ENCODE measurements at regions of chr1 and their contacts with region 1.

Region 1: DNA sequence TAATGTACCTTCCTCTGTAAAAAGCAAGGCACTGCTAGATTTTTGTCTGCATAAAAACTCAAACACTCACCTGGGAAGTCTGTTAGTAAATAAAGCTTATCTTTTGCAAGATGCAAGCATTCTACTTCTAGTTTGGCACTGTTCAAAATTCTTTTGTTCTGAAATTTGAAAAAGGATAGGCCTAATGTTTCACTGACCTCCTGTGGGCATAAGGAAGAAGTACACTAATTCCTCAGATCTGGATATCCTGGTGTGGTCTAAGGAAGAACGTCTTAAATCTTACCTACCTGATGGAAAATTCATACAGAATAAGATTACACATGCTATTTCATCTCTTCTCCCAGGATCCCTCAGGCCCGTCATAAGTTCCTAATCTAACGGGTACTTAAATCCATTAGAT is 93.5 kb upstream of the CAMK1G start:
- DNase-seq: peak; percentile 69
- H3K4me3 Mint-ChIP-seq: no peak overlapping the region
- H3K27ac Mint-ChIP-seq: no peak overlapping the region
- H3K4me1 Mint-ChIP-seq: peaks cover 26% of the 10 kb centered on the region
- H3K27me3 Mint-ChIP-seq: no peaks in the 10 kb centered on the region
- CTCF ChIP-seq: peak; percentile 90

Region 2: GRCh38 chr1:208652296-208653160 is 837.5 kb before region 1 on chr1:
- CTCF ChIA-PET with region 1: interaction called, 10 read pairs
- POLR2A ChIA-PET with region 1: interaction called, 5 read pairs
- intact Hi-C with region 1: loop called (anchors 2 kb)
- DNase-seq: peak; percentile 83
- H3K4me3 Mint-ChIP-seq: no peak overlapping the region
- H3K27ac Mint-ChIP-seq: no peak overlapping the region
- H3K4me1 Mint-ChIP-seq: peaks cover 13% of the 10 kb centered on the region
- H3K27me3 Mint-ChIP-seq: peaks cover 21% of the 10 kb centered on the region
- CTCF ChIP-seq: peak; percentile 98

Region 3: GRCh38 chr1:209266590-209267172 is 223.3 kb before region 1 on chr1:
- CTCF ChIA-PET with region 1: interaction called, 17 read pairs
- POLR2A ChIA-PET with region 1: no interaction called
- intact Hi-C with region 1: no loop called
- DNase-seq: peak; percentile 55
- H3K4me3 Mint-ChIP-seq: peak overlapping the region; percentile 7
- H3K27ac Mint-ChIP-seq: no peak overlapping the region
- H3K4me1 Mint-ChIP-seq: peaks cover 10% of the 10 kb centered on the region
- H3K27me3 Mint-ChIP-seq: no peaks in the 10 kb centered on the region
- CTCF ChIP-seq: no peak

Region 4: DNA sequence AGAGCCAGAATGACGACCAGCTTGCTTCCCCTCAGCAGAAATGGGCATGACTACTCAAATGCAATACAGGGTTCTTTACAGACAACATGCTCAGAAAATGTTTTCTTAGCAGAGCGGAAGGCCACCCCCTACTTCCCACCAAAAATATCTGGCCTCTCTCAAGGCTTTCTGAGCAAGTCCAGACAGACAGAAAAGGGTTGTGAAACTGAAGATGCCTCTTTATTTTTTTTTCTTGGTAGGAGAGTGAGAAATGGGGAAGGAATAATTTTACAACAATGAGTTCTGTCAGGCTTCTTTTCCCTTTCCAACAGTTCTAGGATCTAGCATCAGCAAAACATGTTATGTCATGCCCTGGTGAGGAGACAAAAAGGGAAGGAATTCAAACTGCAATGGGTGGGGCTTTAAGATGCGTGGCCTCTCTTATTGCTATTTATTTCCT is 78.5 kb before region 1 on chr1:
- CTCF ChIA-PET with region 1: interaction called, 10 read pairs
- POLR2A ChIA-PET with region 1: interaction called, 16 read pairs
- intact Hi-C with region 1: no loop called
- DNase-seq: peak; percentile 99
- H3K4me3 Mint-ChIP-seq: peak overlapping the region; percentile 44
- H3K27ac Mint-ChIP-seq: peak overlapping the region; percentile 89
- H3K4me1 Mint-ChIP-seq: peaks cover 70% of the 10 kb centered on the region
- H3K27me3 Mint-ChIP-seq: no peaks in the 10 kb centered on the region
- CTCF ChIP-seq: no peak

Region 5: GRCh38 chr1:209443971-209444651 is 45.9 kb before region 1 on chr1:
- CTCF ChIA-PET with region 1: interaction called, 133 read pairs
- POLR2A ChIA-PET with region 1: interaction called, 391 read pairs
- intact Hi-C with region 1: no loop called
- DNase-seq: peak; percentile 54
- H3K4me3 Mint-ChIP-seq: no peak overlapping the region
- H3K27ac Mint-ChIP-seq: peak overlapping the region; percentile 17
- H3K4me1 Mint-ChIP-seq: peaks cover 24% of the 10 kb centered on the region
- H3K27me3 Mint-ChIP-seq: no peaks in the 10 kb centered on the region
- CTCF ChIP-seq: no peak

Region 6: GRCh38 chr1:209473025-209473424 is 17.0 kb before region 1 on chr1:
- CTCF ChIA-PET with region 1: interaction called, 15 read pairs
- POLR2A ChIA-PET with region 1: interaction called, 12 read pairs
- intact Hi-C with region 1: no loop called
- DNase-seq: no peak
- H3K4me3 Mint-ChIP-seq: no peak overlapping the region
- H3K27ac Mint-ChIP-seq: no peak overlapping the region
- H3K4me1 Mint-ChIP-seq: peaks cover 5% of the 10 kb centered on the region
- H3K27me3 Mint-ChIP-seq: no peaks in the 10 kb centered on the region
- CTCF ChIP-seq: no peak

Region 7: DNA sequence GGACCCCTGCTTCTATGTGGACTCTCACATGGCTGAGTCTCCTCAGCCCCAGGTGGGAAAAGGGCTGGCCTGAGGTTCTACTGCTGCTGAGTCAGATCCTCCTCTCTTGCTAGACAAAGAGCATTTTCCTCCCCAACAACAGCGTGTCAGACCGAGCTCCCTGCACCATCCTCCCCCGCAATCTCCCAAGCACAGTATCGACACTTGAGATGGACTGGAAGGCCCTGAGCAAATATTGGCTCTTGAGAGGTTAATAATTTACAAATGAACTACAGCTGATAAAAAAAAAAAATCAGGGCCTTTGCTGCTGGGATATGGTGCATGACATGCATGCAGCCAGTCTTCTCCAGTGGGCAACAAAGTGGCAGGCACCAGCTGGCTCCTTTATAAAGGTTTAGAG is 38.0 kb after region 1 on chr1:
- CTCF ChIA-PET with region 1: interaction called, 11 read pairs
- POLR2A ChIA-PET with region 1: interaction called, 13 read pairs
- intact Hi-C with region 1: no loop called
- DNase-seq: peak; percentile 36
- H3K4me3 Mint-ChIP-seq: no peak overlapping the region
- H3K27ac Mint-ChIP-seq: peak overlapping the region; percentile 60
- H3K4me1 Mint-ChIP-seq: peaks cover 64% of the 10 kb centered on the region
- H3K27me3 Mint-ChIP-seq: no peaks in the 10 kb centered on the region
- CTCF ChIP-seq: no peak

Measured in MCF 10A (cell line).